ENCODE measurements at regions of chr20 and their contacts with region 1.

Region 1: DNA sequence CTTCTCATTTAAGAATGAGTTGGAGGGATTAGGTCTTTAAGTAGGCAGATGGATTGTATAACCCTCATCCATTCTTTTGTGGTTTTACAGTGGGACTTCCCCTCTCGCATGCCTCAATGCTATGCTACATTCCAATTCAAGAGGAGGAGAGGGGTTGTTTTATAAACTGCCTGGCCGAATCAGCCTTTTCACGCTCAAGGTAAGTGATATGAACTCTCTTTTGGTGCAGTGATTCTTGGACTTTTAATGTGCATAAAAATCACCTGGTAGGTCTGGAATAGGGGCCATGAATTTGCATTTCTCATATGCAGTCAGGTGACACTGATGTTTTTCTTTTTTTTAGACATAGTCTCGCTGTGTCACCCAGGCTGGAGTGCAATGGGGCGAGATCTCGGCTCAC is 10.8 kb downstream of the ASXL1 start:
- DNase-seq: no peak
- H3K4me3 ChIP-seq: no peak overlapping the region
- H3K27me3 ChIP-seq: no peaks in the 10 kb centered on the region
- CTCF ChIP-seq: no peak

Region 2: DNA sequence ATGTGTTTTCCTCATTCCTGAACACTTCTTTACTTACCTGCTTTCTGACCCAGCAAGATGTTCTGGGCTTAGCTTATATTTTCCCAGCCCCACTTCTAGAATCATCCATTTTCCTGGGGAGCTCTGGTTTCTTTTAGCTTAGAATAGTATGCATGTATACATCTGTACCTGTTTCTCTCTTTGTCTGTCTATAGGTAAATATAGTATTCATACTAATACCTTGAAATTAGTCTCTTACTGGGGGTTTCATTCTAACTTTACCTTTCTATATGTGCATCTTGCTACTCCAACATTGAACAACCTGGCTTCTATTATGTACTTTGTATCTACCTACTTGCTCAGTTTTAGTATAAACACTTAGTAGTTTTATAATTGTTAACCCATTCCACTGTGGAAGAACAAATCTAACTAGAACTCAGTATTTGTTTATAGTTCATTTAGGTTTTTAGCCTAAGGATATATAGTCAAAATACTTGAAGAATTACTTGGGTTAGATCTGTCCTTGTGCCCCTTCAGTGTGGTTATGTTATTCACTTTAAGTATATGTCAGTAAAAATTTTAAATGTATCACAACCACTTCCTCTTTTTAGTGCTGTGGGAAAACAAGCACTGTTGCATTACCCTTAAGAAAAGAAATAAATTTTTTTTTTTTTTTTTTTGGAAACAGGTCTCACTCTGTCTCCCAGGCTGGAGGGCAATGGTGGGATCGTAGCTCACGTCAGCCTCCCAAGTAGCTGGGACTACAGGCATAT is 43.2 kb after region 1 on chr20:
- CTCF ChIA-PET with region 1: no interaction called
- POLR2A ChIA-PET with region 1: interaction called, 21 read pairs
- DNase-seq: no peak
- H3K4me3 ChIP-seq: no peak overlapping the region
- H3K27me3 ChIP-seq: no peaks in the 10 kb centered on the region
- CTCF ChIP-seq: no peak

Region 3: DNA sequence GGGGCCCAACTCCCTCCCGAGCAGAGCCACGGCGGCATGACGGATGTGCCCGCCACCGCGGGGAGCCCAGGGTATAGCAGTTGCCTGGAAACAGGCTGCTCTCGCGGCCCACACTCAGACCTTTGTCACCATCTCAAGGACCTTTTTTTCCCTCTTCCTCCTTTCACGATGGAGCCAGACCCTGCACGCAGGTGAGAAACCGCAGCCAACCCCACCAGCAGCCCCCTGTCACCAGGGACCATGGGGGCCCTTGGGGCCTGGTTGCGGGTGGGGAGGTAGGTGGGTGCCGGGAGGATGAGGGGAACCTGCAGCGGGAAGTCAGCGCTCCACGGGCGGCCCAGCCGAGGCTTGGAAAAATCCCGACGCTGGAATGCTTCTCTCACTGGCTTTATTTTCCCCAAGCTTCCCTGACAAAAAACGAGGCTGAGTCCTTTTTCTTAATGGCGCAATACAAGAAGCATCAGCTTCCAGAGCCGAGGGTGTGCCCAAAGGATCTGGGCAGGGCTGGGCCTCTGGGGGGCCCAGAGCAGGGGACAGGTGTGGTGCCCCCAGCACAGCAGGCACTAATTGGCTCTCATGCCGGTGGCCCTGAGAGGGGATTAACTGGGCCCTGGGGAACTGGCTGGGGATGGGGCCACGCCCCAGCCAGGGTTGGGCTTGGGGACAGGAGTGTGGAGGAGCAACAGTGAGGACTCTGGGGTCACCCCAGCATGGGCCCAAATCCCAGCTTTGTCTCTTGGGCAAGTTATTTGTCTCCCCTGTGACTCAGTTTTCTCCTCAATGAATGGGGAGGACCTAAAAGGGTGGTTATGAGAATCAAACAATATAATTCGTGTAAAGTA is 192.3 kb after region 1 on chr20:
- CTCF ChIA-PET with region 1: no interaction called
- POLR2A ChIA-PET with region 1: no interaction called
- DNase-seq: no peak
- H3K4me3 ChIP-seq: no peak overlapping the region
- H3K27me3 ChIP-seq: no peaks in the 10 kb centered on the region
- CTCF ChIP-seq: no peak

Measured in BJ (cell line).